ENCODE measurements at regions of chr16 and their contacts with region 1.

Region 1: DNA sequence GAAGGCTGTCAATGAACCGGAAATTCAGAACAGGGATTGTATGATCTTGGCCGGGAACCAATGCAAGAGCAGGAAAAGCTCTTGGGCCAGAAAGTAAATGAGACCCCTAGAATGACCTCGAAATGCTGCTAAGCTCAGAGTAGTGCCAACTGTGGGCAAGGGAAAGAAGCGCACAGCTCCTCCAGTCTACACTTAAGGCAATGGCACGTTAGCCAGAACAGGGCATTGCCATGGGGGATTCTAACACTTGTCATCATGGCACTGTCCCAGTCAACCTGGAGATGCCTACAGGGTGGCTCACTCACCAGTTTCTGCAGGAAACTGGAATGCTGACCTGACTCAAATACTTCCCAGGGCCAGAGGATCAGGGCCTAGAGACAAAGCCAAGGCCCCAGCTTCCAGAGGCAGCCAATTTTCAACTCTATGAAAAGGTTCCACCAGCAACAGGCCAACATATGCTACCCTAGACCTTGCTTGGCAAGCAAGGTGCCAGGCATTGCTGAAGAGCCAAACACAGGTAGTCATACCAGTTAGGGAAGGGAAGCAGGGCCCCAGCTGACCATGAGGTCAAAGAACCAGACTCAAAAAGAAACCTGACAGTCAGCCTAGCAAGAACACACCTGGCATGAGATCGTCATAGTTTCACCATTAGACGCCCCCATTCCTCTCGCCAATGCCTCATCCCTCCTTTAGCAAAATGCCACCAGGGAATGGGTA is 34.9 kb downstream of the ARHGAP17 start:
- DNase-seq: no peak
- H3K4me3 ChIP-seq: peak overlapping the region; percentile 25 to 40
- H3K27ac ChIP-seq: peak overlapping the region; percentile 69 to 78
- H3K4me1 ChIP-seq: peaks cover 0 to 91% (median 60%) of the 10 kb centered on the region in 4 donors
- H3K27me3 ChIP-seq: no peaks in the 10 kb centered on the region
- CTCF ChIP-seq: no peak

Region 2: DNA sequence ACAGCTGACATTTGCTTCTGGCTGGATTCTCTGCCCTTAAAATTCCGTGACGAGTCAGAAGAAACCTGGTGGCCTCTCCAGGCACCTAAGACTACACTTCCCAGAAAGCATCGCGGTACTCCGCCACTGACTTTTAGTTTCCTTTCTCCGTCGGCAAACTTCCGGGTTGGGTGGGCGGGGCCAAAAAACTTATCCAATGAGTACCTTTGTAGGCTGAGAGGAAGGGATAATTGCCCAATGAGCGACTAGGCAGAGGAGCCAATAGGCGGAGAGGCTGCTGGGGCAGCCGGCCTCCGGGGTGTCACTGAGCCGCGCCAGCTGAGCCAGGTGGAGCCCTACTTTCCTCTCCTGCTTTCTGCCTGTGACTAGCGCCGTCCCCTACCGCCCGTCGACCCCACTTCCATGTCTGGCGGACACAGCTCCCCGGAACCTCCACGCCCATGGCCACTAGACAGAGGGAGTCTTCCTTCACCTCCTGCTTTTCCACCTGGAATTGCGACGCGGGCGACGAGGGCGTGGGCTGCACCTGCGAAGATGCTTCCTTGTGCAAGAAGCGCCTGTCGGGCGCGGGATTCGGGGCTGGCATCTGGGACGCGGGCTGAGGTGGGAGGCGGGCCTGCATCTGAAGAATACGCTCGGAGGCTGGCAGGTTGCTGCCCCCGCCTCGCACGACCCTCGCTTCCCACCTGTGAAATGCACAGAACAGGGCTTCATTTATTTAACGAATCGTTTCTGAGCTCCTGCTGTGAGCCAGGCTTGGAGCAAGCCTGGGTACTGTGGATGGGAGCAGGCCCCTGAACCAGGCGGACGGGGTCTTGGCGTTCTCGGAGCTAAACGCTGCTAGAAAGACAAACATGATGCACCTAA is 51.4 kb after region 1 on chr16:
- intact Hi-C with region 1: loop called (anchors 5 kb)
- DNase-seq: peak; percentile 86 to 93
- H3K4me3 ChIP-seq: peak overlapping the region; percentile 75 to 82
- H3K27ac ChIP-seq: peak overlapping the region; percentile 45 to 73
- H3K4me1 ChIP-seq: peaks cover 0 to 28% (median 15%) of the 10 kb centered on the region in 4 donors
- H3K27me3 ChIP-seq: no peaks in the 10 kb centered on the region
- CTCF ChIP-seq: no peak

Region 3: GRCh38 chr16:25692340-25692736 is 712.1 kb after region 1 on chr16:
- intact Hi-C with region 1: no loop called
- DNase-seq: no peak
- H3K4me3 ChIP-seq: no peak overlapping the region
- H3K27ac ChIP-seq: no peak overlapping the region
- H3K4me1 ChIP-seq: peaks cover 0 to 17% (median 10%) of the 10 kb centered on the region in 4 donors
- H3K27me3 ChIP-seq: peaks cover 0 to 46% of the 10 kb centered on the region in 2 donors
- CTCF ChIP-seq: no peak